Calu3 (cell line): ENCODE measurements at regions of chr12 and their contacts with region 1.

Region 1: GRCh38 chr12:31406345-31406744 is 80.4 kb upstream of the SINHCAF start:
- DNase-seq: no peak
- H3K4me3 Mint-ChIP-seq: no peak overlapping the region
- H3K27ac Mint-ChIP-seq: no peak overlapping the region
- H3K4me1 Mint-ChIP-seq: no peaks in the 10 kb centered on the region
- H3K27me3 Mint-ChIP-seq: no peaks in the 10 kb centered on the region
- CTCF ChIP-seq: no peak

Region 2: DNA sequence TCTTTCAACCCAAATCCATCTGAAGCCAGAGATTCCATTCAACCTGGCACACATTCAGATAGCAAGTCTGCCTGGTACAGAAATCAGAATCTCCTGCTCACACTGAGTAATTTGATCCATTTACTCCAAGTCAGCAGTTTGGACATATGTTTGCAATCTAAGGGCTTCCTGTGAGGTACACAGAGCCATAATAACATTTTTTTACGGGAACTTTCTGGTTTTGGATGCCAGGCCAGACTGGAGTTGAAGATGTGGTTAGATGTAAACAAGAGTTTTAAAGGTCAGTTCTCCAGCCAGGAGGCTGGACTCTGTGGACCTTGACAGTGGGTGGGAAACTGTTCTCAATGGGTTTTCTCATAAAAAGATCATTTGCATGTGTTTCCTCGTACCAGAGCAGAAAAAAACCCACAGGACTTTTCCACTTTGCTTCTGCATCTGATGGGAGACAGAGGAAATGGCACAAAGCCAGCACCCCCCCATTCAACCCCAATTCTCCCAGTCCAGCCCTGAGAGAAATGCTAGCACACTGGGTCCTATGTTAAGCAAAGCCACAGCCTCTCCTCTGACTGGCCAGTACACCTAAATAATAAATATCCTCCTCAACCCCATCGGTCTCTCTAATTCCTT is 497.5 kb before region 1 on chr12:
- CTCF ChIA-PET with region 1: no interaction called
- intact Hi-C with region 1: no loop called
- DNase-seq: no peak
- H3K4me3 Mint-ChIP-seq: no peak overlapping the region
- H3K27ac Mint-ChIP-seq: no peak overlapping the region
- H3K4me1 Mint-ChIP-seq: no peaks in the 10 kb centered on the region
- H3K27me3 Mint-ChIP-seq: peaks cover 62% of the 10 kb centered on the region
- CTCF ChIP-seq: no peak

Region 3: GRCh38 chr12:31342286-31342685 is 64.1 kb before region 1 on chr12:
- CTCF ChIA-PET with region 1: no interaction called
- intact Hi-C with region 1: no loop called
- DNase-seq: no peak
- H3K4me3 Mint-ChIP-seq: no peak overlapping the region
- H3K27ac Mint-ChIP-seq: no peak overlapping the region
- H3K4me1 Mint-ChIP-seq: peaks cover 21% of the 10 kb centered on the region
- H3K27me3 Mint-ChIP-seq: no peaks in the 10 kb centered on the region
- CTCF ChIP-seq: no peak

Region 4: GRCh38 chr12:31466768-31467167 is 60.4 kb after region 1 on chr12:
- CTCF ChIA-PET with region 1: no interaction called
- intact Hi-C with region 1: no loop called
- DNase-seq: no peak
- H3K4me3 Mint-ChIP-seq: no peak overlapping the region
- H3K27ac Mint-ChIP-seq: no peak overlapping the region
- H3K4me1 Mint-ChIP-seq: peaks cover 22% of the 10 kb centered on the region
- H3K27me3 Mint-ChIP-seq: no peaks in the 10 kb centered on the region
- CTCF ChIP-seq: no peak

Region 5: GRCh38 chr12:31629756-31630732 is 223.7 kb after region 1 on chr12:
- CTCF ChIA-PET with region 1: interaction called, 19 read pairs
- intact Hi-C with region 1: no loop called
- DNase-seq: no peak
- H3K4me3 Mint-ChIP-seq: no peak overlapping the region
- H3K27ac Mint-ChIP-seq: no peak overlapping the region
- H3K4me1 Mint-ChIP-seq: no peaks in the 10 kb centered on the region
- H3K27me3 Mint-ChIP-seq: no peaks in the 10 kb centered on the region
- CTCF ChIP-seq: no peak

Region 6: DNA sequence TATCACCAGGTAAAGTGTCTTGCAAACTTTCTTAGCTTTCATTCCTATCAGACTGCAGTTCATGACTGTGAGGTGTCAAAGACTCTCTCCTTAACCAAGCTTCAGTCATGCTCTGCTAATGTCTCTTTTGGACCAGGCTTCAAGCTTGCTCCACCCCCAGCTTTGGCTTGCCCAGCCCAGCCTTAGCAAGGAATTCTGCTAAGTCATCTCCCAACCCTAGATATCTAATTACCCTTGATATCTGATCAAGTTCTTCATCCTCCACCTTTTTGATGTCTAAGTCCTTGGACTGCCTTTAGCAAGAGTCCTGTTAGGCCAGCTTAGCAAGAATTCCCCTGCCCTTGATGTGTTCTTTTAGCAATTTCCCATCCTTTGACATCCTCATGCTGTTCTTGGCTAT is 884.1 kb after region 1 on chr12:
- CTCF ChIA-PET with region 1: no interaction called
- intact Hi-C with region 1: loop called (anchors 10 kb)
- DNase-seq: no peak
- H3K4me3 Mint-ChIP-seq: no peak overlapping the region
- H3K27ac Mint-ChIP-seq: peak overlapping the region; percentile 12
- H3K4me1 Mint-ChIP-seq: peaks cover 9% of the 10 kb centered on the region
- H3K27me3 Mint-ChIP-seq: no peaks in the 10 kb centered on the region
- CTCF ChIP-seq: no peak